ENCODE measurements at regions of chr7 and their contacts with region 1.

Region 1: GRCh38 chr7:85508642-85509410 is 322.0 kb upstream of the SEMA3D start:
- DNase-seq: no peak
- ATAC-seq: no peak
- H3K4me3 ChIP-seq: no peak overlapping the region
- H3K27ac ChIP-seq: no peak overlapping the region
- H3K4me1 ChIP-seq: no peaks in the 10 kb centered on the region
- H3K27me3 ChIP-seq: no peaks in the 10 kb centered on the region
- CTCF ChIP-seq: no peak
- EP300 ChIP-seq: no peak
- POLR2A ChIP-seq: no peak
- RAD21 ChIP-seq: no peak

Region 2: GRCh38 chr7:85447004-85447403 is 61.8 kb before region 1 on chr7:
- CTCF ChIA-PET with region 1: no interaction called
- POLR2A ChIA-PET with region 1: no interaction called
- in situ Hi-C with region 1: no loop called
- intact Hi-C with region 1: loop called (anchors 10 kb)
- DNase-seq: no peak
- ATAC-seq: no peak
- H3K4me3 ChIP-seq: no peak overlapping the region
- H3K27ac ChIP-seq: no peak overlapping the region
- H3K4me1 ChIP-seq: no peaks in the 10 kb centered on the region
- H3K27me3 ChIP-seq: no peaks in the 10 kb centered on the region
- CTCF ChIP-seq: no peak
- EP300 ChIP-seq: no peak
- POLR2A ChIP-seq: no peak
- RAD21 ChIP-seq: no peak

Region 3: GRCh38 chr7:85573844-85574243 is 65.0 kb after region 1 on chr7:
- CTCF ChIA-PET with region 1: no interaction called
- POLR2A ChIA-PET with region 1: no interaction called
- in situ Hi-C with region 1: no loop called
- intact Hi-C with region 1: no loop called
- DNase-seq: no peak
- ATAC-seq: no peak
- H3K4me3 ChIP-seq: no peak overlapping the region
- H3K27ac ChIP-seq: no peak overlapping the region
- H3K4me1 ChIP-seq: no peaks in the 10 kb centered on the region
- H3K27me3 ChIP-seq: no peaks in the 10 kb centered on the region
- CTCF ChIP-seq: no peak
- EP300 ChIP-seq: no peak
- POLR2A ChIP-seq: no peak
- RAD21 ChIP-seq: no peak

Measured in K562 (cell line).